ENCODE measurements at regions of chr17 and their contacts with region 1.

Region 1: GRCh38 chr17:81609541-81610311 is 27.2 kb downstream of the NPLOC4 start:
- DNase-seq: no peak
- H3K4me3 Mint-ChIP-seq: no peak overlapping the region
- H3K27ac Mint-ChIP-seq: no peak overlapping the region
- H3K4me1 Mint-ChIP-seq: peaks cover 8% of the 10 kb centered on the region
- H3K27me3 Mint-ChIP-seq: no peaks in the 10 kb centered on the region

Region 2: GRCh38 chr17:81481073-81481799 is 128.5 kb before region 1 on chr17:
- intact Hi-C with region 1: no loop called
- DNase-seq: peak; percentile 63
- H3K4me3 Mint-ChIP-seq: peak overlapping the region; percentile 54
- H3K27ac Mint-ChIP-seq: no peak overlapping the region
- H3K4me1 Mint-ChIP-seq: no peaks in the 10 kb centered on the region
- H3K27me3 Mint-ChIP-seq: peaks cover 34% of the 10 kb centered on the region

Region 3: GRCh38 chr17:81576621-81577277 is 33.0 kb before region 1 on chr17:
- intact Hi-C with region 1: loop called (anchors 5 kb)
- DNase-seq: no peak
- H3K4me3 Mint-ChIP-seq: no peak overlapping the region
- H3K27ac Mint-ChIP-seq: no peak overlapping the region
- H3K4me1 Mint-ChIP-seq: peaks cover 7% of the 10 kb centered on the region
- H3K27me3 Mint-ChIP-seq: no peaks in the 10 kb centered on the region